Right ventricle myocardium superior (tissue), 1 donor: ENCODE measurements at regions of chr19 and their contacts with region 1.

Region 1: DNA sequence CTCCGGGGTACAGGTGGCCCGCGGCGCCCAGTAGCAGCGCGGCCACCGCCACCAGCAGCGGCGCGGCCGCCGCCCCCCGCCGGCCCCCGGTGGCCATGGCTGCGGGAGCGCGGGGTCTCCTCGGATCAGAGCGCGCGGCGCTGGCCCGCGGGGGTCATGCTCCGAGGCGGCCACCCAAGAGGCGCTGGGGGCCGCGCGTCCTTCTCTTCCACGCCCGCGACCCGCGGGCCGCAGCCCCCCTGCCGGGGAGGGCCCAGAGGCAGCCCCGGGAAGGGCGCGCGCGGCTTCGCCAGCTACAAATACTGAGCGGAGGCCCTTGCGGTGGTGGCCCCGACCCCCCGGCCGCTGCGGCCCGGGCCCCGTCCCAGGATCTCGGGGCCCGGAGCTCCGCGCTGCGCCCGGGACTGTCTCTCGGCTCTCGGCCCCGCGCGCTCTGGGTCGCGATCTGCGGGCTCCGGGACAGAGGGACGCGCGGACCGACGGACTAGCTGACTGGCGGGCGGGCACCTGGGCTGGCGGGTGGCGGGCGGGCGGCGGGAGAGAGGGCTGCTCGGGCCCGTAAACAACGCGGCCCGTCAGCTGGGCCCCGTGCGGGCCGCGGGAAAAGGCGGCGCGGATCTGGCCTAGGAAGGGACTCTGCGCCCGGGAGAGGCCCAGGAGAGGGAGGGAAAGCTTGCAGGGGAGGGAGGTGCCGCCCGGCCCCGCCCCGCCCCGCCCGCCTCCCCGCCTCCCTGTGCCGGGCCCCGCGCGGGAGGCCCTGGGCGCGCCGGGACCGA is at the start of gene INSR:
- DNase-seq: peak; percentile 93
- ATAC-seq: peak; percentile 96
- total RNA-seq, gene INSR: 71.9 TPM

Region 2: DNA sequence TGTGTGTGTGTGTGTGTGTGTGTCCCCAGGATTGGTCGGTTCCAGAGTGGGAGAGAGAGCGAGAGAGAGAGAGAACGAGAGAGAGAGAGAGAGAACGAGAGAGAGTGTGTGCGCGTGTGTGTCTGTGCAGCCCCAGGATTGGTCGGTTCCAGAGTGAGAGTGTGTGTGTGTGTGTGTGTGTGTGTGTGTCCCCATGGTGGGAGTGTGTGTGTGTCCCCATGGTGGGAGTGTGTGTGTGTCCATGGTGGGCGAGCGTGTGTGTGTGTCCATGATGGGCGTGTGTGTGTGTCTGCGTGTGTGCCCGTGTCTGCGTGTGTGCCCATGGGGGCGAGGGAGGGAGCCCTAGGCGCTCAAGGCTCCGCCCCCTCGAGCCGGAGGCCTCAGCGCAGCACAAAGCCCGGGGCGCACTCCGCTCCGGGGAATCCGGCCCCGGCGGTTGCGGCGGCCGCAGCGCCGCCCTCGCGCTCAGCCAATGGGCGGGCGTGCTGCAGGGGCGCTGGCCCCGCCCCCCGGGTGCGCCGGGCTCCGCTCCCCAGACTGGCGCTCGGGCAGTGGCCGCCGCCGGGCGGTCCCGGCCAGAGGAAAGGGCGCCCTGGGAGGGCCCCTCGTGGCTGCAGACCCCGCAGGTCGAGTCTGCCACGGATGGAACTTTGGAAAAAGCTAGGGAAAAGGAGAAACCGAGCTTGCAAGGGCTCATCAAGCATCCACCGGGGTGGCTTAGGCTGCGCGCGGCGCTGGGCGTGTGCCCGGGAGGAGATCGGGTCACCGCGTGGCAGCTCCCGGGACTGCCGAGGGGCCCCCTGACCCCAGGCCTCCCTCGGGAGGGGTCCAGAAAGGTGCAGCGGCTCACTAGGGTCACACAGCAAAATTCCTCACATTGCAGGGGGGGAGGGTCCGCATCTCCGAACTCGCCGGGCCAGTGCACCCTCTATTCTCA is 96.0 kb before region 1 on chr19:
- intact Hi-C with region 1: loop called (anchors 2 kb)
- DNase-seq: peak; percentile 96
- ATAC-seq: peak; percentile 95